OCI-LY7 (cell line): ENCODE measurements at regions of chr4 and their contacts with region 1.

Region 1: DNA sequence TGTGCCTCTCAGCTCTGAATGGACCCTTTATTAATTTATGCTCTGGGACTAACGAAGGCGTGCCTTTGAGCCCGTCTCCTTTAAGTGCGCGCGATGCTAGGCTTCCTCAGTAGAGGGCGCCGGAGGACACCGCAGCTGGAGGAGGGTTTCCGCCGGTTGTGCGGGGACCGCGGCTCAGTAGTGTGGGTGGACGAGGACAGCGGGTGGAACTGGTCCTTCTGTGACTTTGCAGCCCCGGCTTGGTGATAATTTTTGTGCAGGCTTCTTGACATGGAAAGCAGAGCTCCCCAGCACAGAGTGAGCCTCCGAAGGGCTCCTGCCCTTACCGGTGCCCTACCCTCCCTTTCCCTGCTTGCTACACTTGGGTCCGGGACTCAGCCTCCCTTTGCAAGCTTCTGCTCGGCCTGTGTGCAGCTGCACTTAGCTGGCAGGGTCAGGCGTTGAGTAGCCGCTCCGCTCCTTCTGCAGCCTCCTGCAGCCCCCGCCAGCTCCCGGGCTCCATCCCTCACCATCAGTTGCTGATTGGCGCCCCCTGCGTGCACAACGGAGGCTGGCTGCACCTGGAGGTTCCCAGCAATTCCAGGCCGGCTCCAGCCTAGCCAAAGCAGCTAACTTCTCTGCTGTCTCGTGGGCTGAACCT is 26.8 kb upstream of the BOD1L1 start:
- DNase-seq: peak; percentile 77
- H3K4me3 ChIP-seq: peak overlapping the region; percentile 70
- H3K27ac ChIP-seq: no peak overlapping the region
- H3K4me1 ChIP-seq: no peaks in the 10 kb centered on the region
- CTCF ChIP-seq: peak; percentile 83

Region 2: GRCh38 chr4:13498469-13498868 is 155.8 kb before region 1 on chr4:
- CTCF ChIA-PET with region 1: no interaction called
- POLR2A ChIA-PET with region 1: no interaction called
- intact Hi-C with region 1: no loop called
- DNase-seq: no peak
- H3K4me3 ChIP-seq: no peak overlapping the region
- H3K27ac ChIP-seq: no peak overlapping the region
- H3K4me1 ChIP-seq: no peaks in the 10 kb centered on the region
- CTCF ChIP-seq: no peak

Region 3: DNA sequence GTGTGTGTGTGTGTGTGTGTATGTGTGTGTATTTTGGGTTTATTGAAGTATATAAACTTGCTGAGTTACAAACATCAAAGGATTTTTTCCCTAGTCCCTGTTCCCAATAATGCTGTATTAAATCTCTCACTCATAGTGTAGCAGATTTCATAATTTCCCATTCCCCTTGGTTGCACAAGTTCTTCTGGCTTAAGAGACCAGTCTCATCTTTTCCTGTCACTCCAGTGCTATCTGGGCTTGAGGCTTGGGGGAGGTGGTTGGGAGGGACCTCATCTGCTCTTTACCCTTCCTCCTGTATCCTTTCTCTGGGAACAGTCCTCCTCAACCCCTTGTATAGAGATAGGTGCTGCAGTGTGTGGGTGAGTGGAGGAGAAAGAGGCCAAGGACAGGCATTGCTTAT is 258.7 kb after region 1 on chr4:
- CTCF ChIA-PET with region 1: no interaction called
- POLR2A ChIA-PET with region 1: no interaction called
- intact Hi-C with region 1: loop called (anchors 5 kb)
- DNase-seq: no peak
- H3K4me3 ChIP-seq: no peak overlapping the region
- H3K27ac ChIP-seq: no peak overlapping the region
- H3K4me1 ChIP-seq: no peaks in the 10 kb centered on the region
- CTCF ChIP-seq: no peak

Region 4: DNA sequence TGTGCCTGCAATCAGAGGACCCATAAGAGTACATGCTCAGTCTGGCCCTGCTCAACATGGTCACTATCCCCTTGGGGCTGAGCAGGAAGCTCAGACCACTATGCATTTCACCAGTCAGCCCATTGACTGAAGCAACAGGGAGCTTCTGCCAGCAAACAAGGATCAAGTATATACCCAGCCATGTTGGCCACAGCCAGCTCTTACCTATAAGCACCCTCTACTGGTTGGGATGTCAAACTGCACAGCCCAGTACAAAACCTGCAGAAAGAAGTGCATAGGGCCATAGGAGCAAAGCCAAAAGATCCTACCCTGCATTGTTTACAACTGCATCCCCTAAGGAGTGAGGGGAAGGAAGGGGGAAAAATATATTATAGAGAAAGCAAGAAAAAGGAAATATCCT is 1133.6 kb after region 1 on chr4:
- CTCF ChIA-PET with region 1: no interaction called
- POLR2A ChIA-PET with region 1: no interaction called
- intact Hi-C with region 1: loop called (anchors 1 kb)
- DNase-seq: peak; percentile 34
- H3K4me3 ChIP-seq: no peak overlapping the region
- H3K27ac ChIP-seq: no peak overlapping the region
- H3K4me1 ChIP-seq: no peaks in the 10 kb centered on the region
- CTCF ChIP-seq: peak; percentile 75